PC-3 (cell line): ENCODE measurements at regions of chr17 and their contacts with region 1.

Region 1: DNA sequence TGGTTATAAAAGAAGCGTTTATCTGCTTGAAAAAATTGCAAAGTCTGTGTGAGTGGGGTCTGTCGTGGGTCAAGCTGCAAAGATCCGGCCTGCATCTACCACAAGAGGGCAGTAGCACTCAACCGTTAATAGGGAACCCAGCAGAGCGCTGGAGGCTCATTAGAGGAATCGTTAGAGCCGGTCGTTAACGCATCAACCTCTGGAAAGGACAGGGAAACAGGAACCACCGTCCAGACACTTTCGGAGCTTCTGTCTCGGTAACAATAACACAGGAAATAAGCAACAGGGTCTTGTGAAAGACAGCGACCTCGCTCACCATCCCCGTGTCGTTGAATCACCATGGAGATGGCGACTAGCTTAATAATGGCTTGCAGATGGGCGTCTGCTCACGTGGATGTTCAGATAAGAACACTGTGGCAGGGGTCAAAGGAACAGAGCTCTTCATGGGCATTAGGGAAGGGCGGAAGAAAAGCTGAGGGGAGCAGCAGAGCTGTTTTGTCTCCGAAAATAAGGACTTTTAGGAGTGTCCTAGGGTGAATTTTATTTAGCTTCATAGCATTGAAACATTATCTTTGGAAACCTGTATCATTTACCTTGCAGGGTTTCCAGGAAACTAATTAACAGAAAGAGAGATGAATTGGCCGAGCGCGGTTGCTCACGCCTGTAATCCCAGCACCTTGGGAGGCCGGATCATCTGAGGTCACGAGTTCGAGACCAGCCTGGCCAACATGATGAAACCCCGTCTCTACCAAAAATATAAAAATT is 11.9 kb upstream of the NSRP1 start:
- DNase-seq: peak; percentile 72
- ATAC-seq: peak; percentile 93
- H3K4me3 ChIP-seq: peak overlapping the region; percentile 63
- H3K27ac ChIP-seq: no peak overlapping the region
- H3K4me1 ChIP-seq: 0 out of 2 replicates have a peak, but pooled peaks cover 4% of the 10 kb centered on the region
- H3K27me3 ChIP-seq: no peaks in the 10 kb centered on the region
- CTCF ChIP-seq: peak; percentile 83

Region 2: DNA sequence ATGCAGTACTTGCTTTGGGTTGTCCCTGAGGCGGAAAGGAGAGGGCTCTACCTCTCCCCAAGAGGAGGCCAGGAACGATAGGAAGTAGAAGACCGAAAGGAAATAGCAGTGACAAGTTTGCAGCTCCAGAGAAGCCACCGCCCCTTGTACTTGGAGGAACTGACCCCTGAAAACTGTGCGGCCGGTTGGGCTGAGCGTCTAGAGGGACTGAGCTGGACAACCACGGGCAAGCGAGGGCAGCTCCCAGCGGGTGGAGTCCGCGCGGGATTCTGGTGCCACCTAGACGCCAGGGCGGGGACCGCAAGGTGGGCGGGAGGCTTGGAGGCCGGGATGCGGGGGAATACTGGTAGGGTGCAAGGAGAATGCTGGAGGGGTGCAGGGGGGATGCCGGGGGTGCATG is 132.0 kb after region 1 on chr17:
- CTCF ChIA-PET with region 1: interaction called, 32 read pairs
- POLR2A ChIA-PET with region 1: no interaction called
- intact Hi-C with region 1: loop called (anchors 2 kb)
- DNase-seq: peak; percentile 39
- ATAC-seq: peak; percentile 83
- H3K4me3 ChIP-seq: no peak overlapping the region
- H3K27ac ChIP-seq: no peak overlapping the region
- H3K4me1 ChIP-seq: no peaks in the 10 kb centered on the region
- H3K27me3 ChIP-seq: peaks cover 40% of the 10 kb centered on the region
- CTCF ChIP-seq: peak; percentile 38

Region 3: DNA sequence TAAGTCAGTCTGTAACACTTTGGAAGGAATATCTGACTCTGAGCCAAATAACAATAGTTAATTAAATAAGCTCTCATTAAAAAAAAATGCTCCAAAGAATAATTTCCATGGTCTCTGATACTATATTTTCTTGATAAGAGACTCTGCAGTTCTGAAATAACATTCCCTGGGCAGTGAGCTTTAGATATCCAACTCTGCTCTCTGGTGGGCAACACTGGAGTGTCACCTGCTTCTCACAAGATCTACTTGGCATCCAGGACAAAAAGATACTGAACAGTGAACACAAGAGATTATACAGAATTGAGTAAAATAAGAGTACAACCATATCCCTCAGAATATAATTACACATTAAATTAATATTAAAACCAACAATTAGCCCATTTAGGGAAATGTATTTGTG is 173.3 kb after region 1 on chr17:
- CTCF ChIA-PET with region 1: interaction called, 4 read pairs
- POLR2A ChIA-PET with region 1: no interaction called
- intact Hi-C with region 1: loop called (anchors 1 kb)
- DNase-seq: peak; percentile 9
- ATAC-seq: no peak
- H3K4me3 ChIP-seq: no peak overlapping the region
- H3K27ac ChIP-seq: no peak overlapping the region
- H3K4me1 ChIP-seq: no peaks in the 10 kb centered on the region
- H3K27me3 ChIP-seq: no peaks in the 10 kb centered on the region
- CTCF ChIP-seq: peak; percentile 44; the same call in 1 of the 2 replicates